WTC11 (cell line): ENCODE measurements at regions of chr7 and their contacts with region 1.

Region 1: GRCh38 chr7:134547397-134548054 is 1.4 kb upstream of the AKR1B15 start:
- DNase-seq: peak; percentile 86
- ATAC-seq: peak; percentile 93
- H3K4me3 Mint-ChIP-seq: peak overlapping the region; percentile 73
- H3K27ac Mint-ChIP-seq: peak overlapping the region; percentile 94
- H3K4me1 Mint-ChIP-seq: peaks cover 40% of the 10 kb centered on the region
- H3K27me3 Mint-ChIP-seq: no peaks in the 10 kb centered on the region; the same call in 1 of the 2 replicates
- CTCF ChIP-seq: peak; percentile 74

Region 2: DNA sequence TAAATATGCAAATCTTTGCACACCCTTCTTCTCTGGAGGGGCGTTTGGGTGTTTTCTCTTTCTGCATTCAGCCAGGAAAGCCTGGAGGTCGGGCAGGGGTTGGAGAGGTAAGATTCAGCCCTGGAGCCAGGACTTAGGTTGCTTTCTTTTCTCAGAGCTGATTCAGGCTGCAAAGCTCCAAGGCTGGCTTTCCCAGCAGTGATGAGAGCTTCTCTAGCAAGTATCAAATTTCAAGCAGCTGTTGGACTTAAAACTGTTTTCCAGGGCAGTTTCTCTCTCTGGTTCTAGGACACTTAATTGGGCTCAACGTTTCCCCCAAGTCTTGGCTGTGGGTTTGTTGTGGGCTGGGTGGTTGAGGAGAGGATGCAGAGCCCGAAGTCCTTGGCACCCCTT is 19.6 kb before region 1 on chr7:
- CTCF ChIA-PET with region 1: interaction called, 17 read pairs
- POLR2A ChIA-PET with region 1: no interaction called
- DNase-seq: no peak
- ATAC-seq: peak; percentile 61
- H3K4me3 Mint-ChIP-seq: no peak overlapping the region
- H3K27ac Mint-ChIP-seq: no peak overlapping the region
- H3K4me1 Mint-ChIP-seq: peaks cover 14% of the 10 kb centered on the region
- H3K27me3 Mint-ChIP-seq: no peaks in the 10 kb centered on the region; the same call in 1 of the 2 replicates
- CTCF ChIP-seq: no peak

Region 3: DNA sequence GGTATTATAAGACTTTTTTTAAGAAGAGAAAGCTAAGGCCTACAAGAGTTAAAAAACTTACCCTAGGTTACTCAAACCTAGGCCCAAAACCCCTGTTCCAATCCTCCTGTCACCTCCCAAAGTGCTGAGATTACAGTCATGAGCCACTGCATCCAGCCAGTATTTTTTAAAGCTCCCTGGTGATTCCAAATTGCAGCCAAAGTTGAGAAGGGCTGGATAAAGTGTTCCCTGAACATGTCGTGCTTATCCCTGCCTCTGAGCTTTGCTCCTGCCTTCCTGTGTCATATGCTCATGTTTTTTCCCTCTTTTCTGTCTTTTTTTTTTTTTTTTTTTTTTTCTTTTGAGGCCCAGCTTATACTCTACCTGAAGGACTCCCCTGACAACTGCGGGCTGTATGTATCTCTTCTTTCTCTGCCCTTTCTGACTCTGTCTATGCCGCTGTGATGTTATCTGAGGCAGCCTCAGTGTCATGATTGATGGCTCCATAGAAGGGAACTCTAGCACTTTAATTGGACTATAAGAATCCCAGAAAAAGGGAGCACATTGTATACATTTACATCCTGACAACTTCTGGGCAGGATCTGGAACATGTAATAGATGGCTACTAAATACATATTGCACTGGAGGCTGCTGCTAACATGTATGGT is 12.1 kb before region 1 on chr7:
- CTCF ChIA-PET with region 1: interaction called, 12 read pairs
- POLR2A ChIA-PET with region 1: no interaction called
- DNase-seq: no peak
- ATAC-seq: no peak
- H3K4me3 Mint-ChIP-seq: no peak overlapping the region
- H3K27ac Mint-ChIP-seq: no peak overlapping the region
- H3K4me1 Mint-ChIP-seq: no peaks in the 10 kb centered on the region
- H3K27me3 Mint-ChIP-seq: no peaks in the 10 kb centered on the region; the same call in 1 of the 2 replicates
- CTCF ChIP-seq: no peak

Region 4: DNA sequence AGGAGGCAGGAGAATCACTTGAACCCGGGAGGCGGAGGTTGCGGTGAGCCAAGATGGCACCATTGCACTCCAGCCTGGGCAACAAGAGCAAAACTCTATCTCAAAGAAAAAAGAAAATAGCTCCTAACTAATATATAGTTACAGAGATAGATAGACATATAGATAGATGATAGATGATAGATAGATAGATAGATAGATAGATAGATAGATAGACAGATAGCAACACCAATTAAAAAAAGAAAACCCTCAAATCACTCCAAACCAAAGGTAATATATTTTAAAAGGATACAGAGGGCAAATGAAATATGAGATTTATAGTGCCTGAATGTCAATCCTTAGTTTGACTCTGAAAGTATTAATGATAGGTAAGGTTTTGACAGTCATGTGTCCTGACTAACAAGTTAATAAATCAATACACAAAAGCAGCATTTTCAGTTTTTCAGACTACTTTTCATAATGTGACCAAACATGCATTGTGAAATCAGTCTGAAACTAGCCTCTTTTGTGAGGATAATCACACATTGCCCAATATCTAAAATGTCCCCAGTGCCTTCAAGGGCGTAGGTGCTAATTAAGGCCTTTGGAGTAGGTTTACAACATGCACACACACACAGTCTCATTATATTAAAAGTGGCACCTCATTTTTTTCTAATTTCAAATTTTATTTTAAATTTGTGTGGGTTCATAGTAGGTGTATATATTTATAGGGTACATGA is 160.3 kb after region 1 on chr7:
- CTCF ChIA-PET with region 1: no interaction called
- POLR2A ChIA-PET with region 1: no interaction called
- DNase-seq: no peak
- ATAC-seq: no peak
- H3K4me3 Mint-ChIP-seq: no peak overlapping the region
- H3K27ac Mint-ChIP-seq: no peak overlapping the region
- H3K4me1 Mint-ChIP-seq: peaks cover 25% of the 10 kb centered on the region
- H3K27me3 Mint-ChIP-seq: no peaks in the 10 kb centered on the region; the same call in 1 of the 2 replicates
- CTCF ChIP-seq: no peak